PC-9 (cell line): ENCODE measurements at regions of chr19 and their contacts with region 1.

Region 1: DNA sequence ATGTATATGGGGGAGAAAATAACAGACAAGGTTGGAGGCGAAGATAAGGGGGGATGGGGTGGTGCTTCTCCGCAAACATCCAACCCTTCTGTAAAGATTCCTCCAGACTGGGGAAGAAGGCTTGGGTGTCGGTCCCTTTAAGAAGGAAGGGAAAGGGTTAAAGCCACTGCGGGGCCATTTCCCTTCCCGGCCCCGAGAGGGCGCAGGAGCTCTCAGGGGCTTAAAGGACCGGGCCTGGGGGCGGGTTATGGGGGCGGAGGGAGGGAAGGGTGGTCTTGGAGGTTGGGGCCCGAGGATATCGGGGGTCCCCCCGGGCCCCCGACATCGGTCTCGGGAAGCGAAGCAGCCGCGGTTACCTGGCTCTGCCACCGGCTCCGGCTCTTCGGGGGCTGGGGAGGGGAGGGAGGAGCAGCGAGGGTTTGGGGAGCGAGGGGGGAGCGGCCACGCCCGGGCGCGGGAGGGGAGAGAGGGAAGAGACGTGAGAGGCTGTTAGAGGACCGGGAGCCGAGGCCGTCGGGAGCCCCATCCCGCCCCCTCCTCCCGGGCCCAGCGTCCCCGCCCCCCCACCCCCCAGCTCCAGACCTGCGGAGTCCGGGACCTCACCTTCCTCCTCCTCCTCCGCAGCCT is 2.8 kb downstream of the TNNT1 start:
- DNase-seq: peak; percentile 59 to 83
- H3K4me3 ChIP-seq: peak overlapping the region; percentile 67
- H3K27ac ChIP-seq: no peak overlapping the region
- H3K4me1 ChIP-seq: peaks cover 20% of the 10 kb centered on the region; the same call in 1 of the 2 replicates
- H3K27me3 ChIP-seq: peaks cover 4% of the 10 kb centered on the region; the same call in 1 of the 2 replicates
- CTCF ChIP-seq: peak; percentile 98

Region 2: DNA sequence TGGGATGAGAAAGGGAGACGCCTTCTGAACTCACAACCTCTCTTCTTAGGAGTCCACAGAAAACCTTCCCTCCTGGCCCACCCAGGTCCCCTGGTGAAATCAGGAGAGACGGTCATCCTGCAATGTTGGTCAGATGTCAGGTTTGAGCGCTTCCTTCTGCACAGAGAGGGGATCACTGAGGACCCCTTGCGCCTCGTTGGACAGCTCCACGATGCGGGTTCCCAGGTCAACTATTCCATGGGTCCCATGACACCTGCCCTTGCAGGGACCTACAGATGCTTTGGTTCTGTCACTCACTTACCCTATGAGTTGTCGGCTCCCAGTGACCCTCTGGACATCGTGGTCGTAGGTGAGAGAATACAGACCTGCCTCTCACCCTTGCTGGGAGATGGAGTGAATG is 418.6 kb before region 1 on chr19:
- CTCF ChIA-PET with region 1: no interaction called
- POLR2A ChIA-PET with region 1: no interaction called
- intact Hi-C with region 1: no loop called
- DNase-seq: no peak
- H3K4me3 ChIP-seq: no peak overlapping the region
- H3K27ac ChIP-seq: no peak overlapping the region
- H3K4me1 ChIP-seq: no peaks in the 10 kb centered on the region
- H3K27me3 ChIP-seq: peaks cover 54% of the 10 kb centered on the region
- CTCF ChIP-seq: no peak

Region 3: GRCh38 chr19:55117636-55118391 is 28.4 kb before region 1 on chr19 and contains the start of gene PPP1R12C:
- CTCF ChIA-PET with region 1: interaction called, 3 read pairs
- POLR2A ChIA-PET with region 1: interaction called, 12 read pairs
- intact Hi-C with region 1: no loop called
- DNase-seq: peak; percentile 98 to 99
- H3K4me3 ChIP-seq: peak within 1 kb of the TSS; percentile 99
- H3K27ac ChIP-seq: peak within 1 kb of the TSS; percentile 47
- H3K4me1 ChIP-seq: peaks cover 22% of the 10 kb centered on the region
- H3K27me3 ChIP-seq: no peaks in the 10 kb centered on the region
- CTCF ChIP-seq: no peak; the same call in 1 of the 2 replicates
- total RNA-seq, gene PPP1R12C: 110 and 114 TPM in 2 replicates

Region 4: DNA sequence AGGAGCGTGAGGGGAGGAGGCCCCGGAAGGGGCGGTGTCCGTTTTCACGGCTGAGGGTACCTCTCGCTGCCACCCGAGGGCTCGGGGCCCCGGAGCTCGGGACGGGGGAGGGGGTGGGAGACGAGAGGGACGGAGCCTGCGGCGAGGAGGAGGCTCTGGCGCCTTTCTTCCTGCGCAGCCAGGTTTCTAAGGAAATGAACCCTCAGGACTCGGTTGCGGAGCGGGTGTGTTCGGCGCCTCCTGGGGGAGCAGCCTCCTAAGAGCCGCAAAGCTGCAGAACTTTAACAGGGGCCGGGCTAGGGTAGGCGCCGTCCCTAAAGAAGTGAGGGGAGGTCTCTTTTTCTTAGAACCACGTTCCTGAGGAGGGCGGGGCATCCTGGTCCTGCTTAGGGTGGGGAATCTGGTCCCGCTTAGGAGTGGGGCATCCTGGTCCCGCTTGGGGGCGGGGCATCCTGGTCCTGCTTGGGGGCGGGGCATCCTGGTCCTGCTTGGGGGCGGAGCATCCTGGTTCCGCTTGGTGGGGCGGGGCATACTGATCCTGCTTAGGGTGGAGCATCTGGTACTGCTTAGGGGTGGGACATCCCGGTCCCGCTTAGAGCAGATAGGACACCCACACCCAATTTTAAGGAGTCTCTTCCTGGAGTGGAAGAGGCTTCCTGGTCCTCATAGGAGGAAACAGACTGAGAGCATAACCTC is 27.7 kb after region 1 on chr19:
- CTCF ChIA-PET with region 1: interaction called, 3 read pairs
- POLR2A ChIA-PET with region 1: interaction called, 14 read pairs
- intact Hi-C with region 1: no loop called
- DNase-seq: peak; percentile 60 to 96
- H3K4me3 ChIP-seq: peak overlapping the region; percentile 88
- H3K27ac ChIP-seq: peak overlapping the region; percentile 23; the same call in 1 of the 2 replicates
- H3K4me1 ChIP-seq: peaks cover 10% of the 10 kb centered on the region; the same call in 1 of the 2 replicates
- H3K27me3 ChIP-seq: no peaks in the 10 kb centered on the region
- CTCF ChIP-seq: no peak; the same call in 1 of the 2 replicates

Region 5: GRCh38 chr19:55279770-55280643 is 133.8 kb after region 1 on chr19 and contains the start of gene HSPBP1:
- CTCF ChIA-PET with region 1: no interaction called
- POLR2A ChIA-PET with region 1: interaction called, 7 read pairs
- intact Hi-C with region 1: loop called (anchors 1 kb)
- DNase-seq: peak; percentile 94 to 100
- H3K4me3 ChIP-seq: peak within 1 kb of the TSS; percentile 94
- H3K27ac ChIP-seq: peak within 1 kb of the TSS; percentile 72
- H3K4me1 ChIP-seq: peaks cover 8% of the 10 kb centered on the region; the same call in 1 of the 2 replicates
- H3K27me3 ChIP-seq: peaks cover 4% of the 10 kb centered on the region; the same call in 1 of the 2 replicates
- CTCF ChIP-seq: no peak
- total RNA-seq, gene HSPBP1: 66.2 and 79.6 TPM in 2 replicates

Region 6: GRCh38 chr19:55476100-55476775 is 330.0 kb after region 1 on chr19 and contains the start of gene ZNF628:
- CTCF ChIA-PET with region 1: no interaction called
- POLR2A ChIA-PET with region 1: interaction called, 6 read pairs
- intact Hi-C with region 1: loop called (anchors 10 kb)
- DNase-seq: peak; percentile 95 to 99
- H3K4me3 ChIP-seq: peak within 1 kb of the TSS; percentile 68
- H3K27ac ChIP-seq: peak within 1 kb of the TSS; percentile 72
- H3K4me1 ChIP-seq: peaks cover 38% of the 10 kb centered on the region
- H3K27me3 ChIP-seq: no peaks in the 10 kb centered on the region
- CTCF ChIP-seq: no peak
- total RNA-seq, gene ZNF628: 17.7 and 19.3 TPM in 2 replicates

Region 7: GRCh38 chr19:55624109-55625003 is 478.2 kb after region 1 on chr19 and contains the start of gene ZNF784:
- CTCF ChIA-PET with region 1: no interaction called
- POLR2A ChIA-PET with region 1: interaction called, 11 read pairs
- intact Hi-C with region 1: no loop called
- DNase-seq: peak; percentile 83 to 94
- H3K4me3 ChIP-seq: peak within 1 kb of the TSS; percentile 62
- H3K27ac ChIP-seq: peak within 1 kb of the TSS; percentile 75
- H3K4me1 ChIP-seq: peaks cover 14% of the 10 kb centered on the region
- H3K27me3 ChIP-seq: no peaks in the 10 kb centered on the region
- CTCF ChIP-seq: no peak
- total RNA-seq, gene ZNF784: 5.4 and 7.7 TPM in 2 replicates